CD4-positive, alpha-beta memory T cell (primary cell): ENCODE measurements at regions of chr6 and their contacts with region 1.

Region 1: DNA sequence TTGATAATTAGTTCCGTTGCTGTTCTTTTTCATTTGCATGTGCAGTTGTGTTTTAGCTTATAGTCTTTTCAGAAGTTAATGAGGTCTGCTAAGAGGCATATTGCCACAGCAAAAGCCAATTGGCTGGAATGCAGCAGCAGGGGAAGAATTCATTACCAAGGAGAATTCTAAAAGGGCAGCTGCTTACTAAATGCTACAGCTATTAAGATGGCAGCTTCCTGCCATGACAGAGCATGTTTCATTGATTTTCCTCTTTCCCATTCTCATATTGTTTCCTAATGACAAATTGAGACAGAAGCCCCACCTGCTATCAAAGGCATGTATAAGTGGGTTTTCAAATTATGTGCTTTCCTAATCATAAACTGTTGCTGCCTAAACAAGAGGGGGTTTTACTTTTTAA is 66.6 kb downstream of the CLVS2 start:
- DNase-seq: no peak
- H3K4me3 ChIP-seq: no peak overlapping the region
- H3K4me3 Mint-ChIP-seq: no peak overlapping the region
- H3K27ac ChIP-seq: no peak overlapping the region
- H3K27ac Mint-ChIP-seq: no peak overlapping the region
- H3K4me1 ChIP-seq: no peaks in the 10 kb centered on the region
- H3K4me1 Mint-ChIP-seq: no peaks in the 10 kb centered on the region
- H3K27me3 ChIP-seq: no peaks in the 10 kb centered on the region
- H3K27me3 Mint-ChIP-seq: no peaks in the 10 kb centered on the region

Region 2: DNA sequence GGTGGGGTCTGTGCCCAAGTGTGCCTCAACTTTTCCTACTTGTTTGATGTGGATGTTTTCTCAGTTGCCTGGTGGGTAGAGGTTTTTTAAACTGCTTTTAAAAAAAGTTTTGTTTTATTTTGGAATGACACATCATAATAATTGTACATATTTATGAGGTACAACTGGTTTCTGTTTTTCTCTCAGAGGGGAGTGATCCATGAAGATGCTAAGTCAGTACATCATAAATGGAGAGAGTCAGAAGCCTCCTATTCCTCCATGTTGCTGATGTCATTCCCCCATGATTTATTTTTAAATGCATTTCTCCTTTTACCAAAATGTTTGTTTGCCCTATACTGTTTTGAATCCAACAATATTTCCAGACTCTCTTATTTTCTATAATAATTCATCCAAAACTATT is 144.0 kb before region 1 on chr6:
- CTCF ChIA-PET with region 1: no interaction called
- POLR2A ChIA-PET with region 1: no interaction called
- intact Hi-C with region 1: loop called (anchors 5 kb)
- DNase-seq: no peak
- H3K4me3 ChIP-seq: no peak overlapping the region
- H3K4me3 Mint-ChIP-seq: no peak overlapping the region
- H3K27ac ChIP-seq: no peak overlapping the region
- H3K27ac Mint-ChIP-seq: no peak overlapping the region
- H3K4me1 ChIP-seq: no peaks in the 10 kb centered on the region
- H3K4me1 Mint-ChIP-seq: no peaks in the 10 kb centered on the region
- H3K27me3 ChIP-seq: no peaks in the 10 kb centered on the region
- H3K27me3 Mint-ChIP-seq: no peaks in the 10 kb centered on the region

Region 3: GRCh38 chr6:123085417-123085816 is 22.7 kb after region 1 on chr6:
- CTCF ChIA-PET with region 1: no interaction called
- POLR2A ChIA-PET with region 1: no interaction called
- intact Hi-C with region 1: no loop called
- DNase-seq: no peak
- H3K4me3 ChIP-seq: no peak overlapping the region
- H3K4me3 Mint-ChIP-seq: no peak overlapping the region
- H3K27ac ChIP-seq: no peak overlapping the region
- H3K27ac Mint-ChIP-seq: no peak overlapping the region
- H3K4me1 ChIP-seq: no peaks in the 10 kb centered on the region
- H3K4me1 Mint-ChIP-seq: no peaks in the 10 kb centered on the region
- H3K27me3 ChIP-seq: no peaks in the 10 kb centered on the region
- H3K27me3 Mint-ChIP-seq: no peaks in the 10 kb centered on the region